MCF 10A (cell line): ENCODE measurements at regions of chr12 and their contacts with region 1.

Region 1: DNA sequence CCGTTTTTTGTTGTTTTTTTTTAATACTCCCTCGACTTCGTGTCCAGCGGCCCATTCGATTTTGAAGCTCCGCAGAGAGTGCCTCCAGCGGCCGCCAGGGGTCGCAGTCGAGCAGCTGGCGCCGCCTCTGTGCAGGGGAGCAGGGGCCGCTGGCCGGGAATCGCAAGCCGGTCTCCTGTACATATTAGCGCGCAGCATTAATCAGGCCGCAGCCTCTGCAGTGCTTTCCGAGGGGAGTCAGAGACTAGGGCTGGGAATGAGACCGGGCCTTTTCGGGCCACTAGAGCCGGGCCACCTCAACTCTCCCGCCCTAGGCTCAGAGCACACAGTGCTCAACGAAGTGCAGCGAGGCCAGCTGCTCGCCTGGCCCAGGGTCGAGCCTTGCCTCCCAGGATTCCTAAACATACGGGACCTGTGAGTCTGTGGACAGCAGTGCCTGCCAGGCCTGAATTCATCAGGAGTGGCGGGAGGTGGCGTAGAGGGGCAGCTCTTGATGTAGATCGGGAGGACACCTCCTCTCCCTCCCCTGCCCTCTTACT is 81.8 kb downstream of the EMP1 start:
- DNase-seq: peak; percentile 65
- H3K4me3 Mint-ChIP-seq: no peak overlapping the region
- H3K27ac Mint-ChIP-seq: no peak overlapping the region
- H3K4me1 Mint-ChIP-seq: no peaks in the 10 kb centered on the region
- H3K27me3 Mint-ChIP-seq: peaks cover 34% of the 10 kb centered on the region
- CTCF ChIP-seq: peak; percentile 91

Region 2: GRCh38 chr12:13179211-13180074 is 98.9 kb before region 1 on chr12:
- CTCF ChIA-PET with region 1: no interaction called
- POLR2A ChIA-PET with region 1: no interaction called
- intact Hi-C with region 1: no loop called
- DNase-seq: peak; percentile 64
- H3K4me3 Mint-ChIP-seq: peak overlapping the region; percentile 49
- H3K27ac Mint-ChIP-seq: peak overlapping the region; percentile 69
- H3K4me1 Mint-ChIP-seq: peaks cover 24% of the 10 kb centered on the region
- H3K27me3 Mint-ChIP-seq: no peaks in the 10 kb centered on the region
- CTCF ChIP-seq: no peak

Region 3: GRCh38 chr12:13211859-13212664 is 66.3 kb before region 1 on chr12:
- CTCF ChIA-PET with region 1: no interaction called
- POLR2A ChIA-PET with region 1: no interaction called
- intact Hi-C with region 1: no loop called
- DNase-seq: peak; percentile 78
- H3K4me3 Mint-ChIP-seq: peak overlapping the region; percentile 0
- H3K27ac Mint-ChIP-seq: peak overlapping the region; percentile 20
- H3K4me1 Mint-ChIP-seq: peaks cover 43% of the 10 kb centered on the region
- H3K27me3 Mint-ChIP-seq: no peaks in the 10 kb centered on the region
- CTCF ChIP-seq: peak; percentile 69

Region 4: DNA sequence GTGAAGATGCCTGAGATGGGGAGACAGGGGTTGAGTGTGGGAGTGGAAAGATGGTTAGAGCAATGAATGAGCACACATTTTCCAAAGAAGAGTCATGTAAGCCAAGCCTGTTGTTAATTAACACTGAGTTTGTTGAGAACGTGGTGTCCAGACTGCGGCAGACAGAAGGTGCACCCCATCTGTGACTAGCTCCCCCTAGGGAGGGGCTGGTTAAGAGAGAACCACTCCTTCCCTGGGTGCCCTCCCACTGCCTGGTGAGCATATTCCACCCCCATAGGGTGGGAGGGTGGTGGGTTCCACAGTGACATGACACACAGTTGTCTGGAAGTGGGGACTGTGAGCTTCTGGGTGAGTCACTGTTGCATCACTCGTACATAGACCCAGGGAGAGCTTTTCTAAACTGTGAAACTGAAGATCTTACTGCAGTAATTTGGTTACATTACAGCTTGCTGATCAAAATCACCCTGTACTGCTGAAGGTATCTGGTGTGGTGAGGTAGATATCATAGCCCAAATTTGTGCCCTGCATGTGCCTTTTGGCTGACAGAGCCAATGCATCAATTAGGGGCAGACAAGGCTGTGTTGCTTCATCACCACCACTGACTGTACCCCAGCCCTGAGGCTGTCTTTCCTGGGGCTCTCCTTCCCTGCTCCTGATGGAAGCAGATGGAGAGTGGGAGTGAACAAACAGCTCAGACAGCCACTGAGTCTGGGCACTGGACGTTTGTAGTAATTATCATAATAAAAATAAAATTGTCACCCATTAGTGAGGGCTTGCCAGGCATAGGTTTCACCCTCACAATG is 69.1 kb after region 1 on chr12:
- CTCF ChIA-PET with region 1: interaction called, 10 read pairs
- POLR2A ChIA-PET with region 1: no interaction called
- intact Hi-C with region 1: loop called (anchors 10 kb)
- DNase-seq: peak; percentile 72
- H3K4me3 Mint-ChIP-seq: no peak overlapping the region
- H3K27ac Mint-ChIP-seq: no peak overlapping the region
- H3K4me1 Mint-ChIP-seq: peaks cover 18% of the 10 kb centered on the region
- H3K27me3 Mint-ChIP-seq: peaks cover 7% of the 10 kb centered on the region
- CTCF ChIP-seq: no peak

Region 5: DNA sequence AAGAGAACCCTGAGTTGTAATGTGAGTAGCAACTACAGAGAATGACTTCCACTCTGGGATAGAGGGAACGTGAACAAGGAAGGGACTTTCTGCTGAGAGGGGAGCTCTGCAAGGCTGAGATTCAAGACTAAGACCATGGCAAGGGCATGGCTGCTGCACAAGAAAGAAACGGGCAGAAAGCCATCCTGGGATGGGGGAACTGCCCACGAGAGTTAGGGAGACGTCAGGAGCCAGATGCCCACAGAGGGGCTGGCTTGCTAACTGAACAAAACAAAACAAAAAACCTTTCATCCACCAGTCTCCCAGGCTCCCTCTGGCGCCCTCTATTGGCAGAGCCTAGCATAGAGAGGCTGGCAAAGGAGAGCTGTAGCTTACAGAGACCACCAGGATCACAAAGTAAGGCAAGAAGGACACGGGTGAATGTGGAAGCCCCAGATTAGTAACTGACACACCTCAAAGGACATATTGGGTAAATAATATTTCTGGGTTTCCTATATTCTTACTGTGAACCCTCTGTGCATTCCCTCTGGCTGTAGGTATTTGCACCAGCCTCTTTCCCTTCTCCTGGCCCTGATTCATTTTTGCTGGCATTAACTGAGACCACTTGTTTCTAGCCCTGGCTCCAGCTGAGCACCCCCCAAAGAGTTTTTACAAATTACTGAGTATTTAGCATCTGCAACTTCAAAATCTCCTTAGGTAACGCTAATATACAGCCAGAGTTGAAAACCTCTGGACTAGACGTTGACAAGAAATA is 256.5 kb after region 1 on chr12:
- CTCF ChIA-PET with region 1: interaction called, 16 read pairs
- POLR2A ChIA-PET with region 1: no interaction called
- intact Hi-C with region 1: loop called (anchors 1 kb)
- DNase-seq: peak; percentile 75
- H3K4me3 Mint-ChIP-seq: no peak overlapping the region
- H3K27ac Mint-ChIP-seq: no peak overlapping the region
- H3K4me1 Mint-ChIP-seq: no peaks in the 10 kb centered on the region
- H3K27me3 Mint-ChIP-seq: peaks cover 27% of the 10 kb centered on the region
- CTCF ChIP-seq: peak; percentile 86

Region 6: GRCh38 chr12:13864081-13864673 is 585.9 kb after region 1 on chr12:
- CTCF ChIA-PET with region 1: no interaction called
- POLR2A ChIA-PET with region 1: no interaction called
- intact Hi-C with region 1: loop called (anchors 10 kb)
- DNase-seq: peak; percentile 73
- H3K4me3 Mint-ChIP-seq: no peak overlapping the region
- H3K27ac Mint-ChIP-seq: no peak overlapping the region
- H3K4me1 Mint-ChIP-seq: no peaks in the 10 kb centered on the region
- H3K27me3 Mint-ChIP-seq: peaks cover 72% of the 10 kb centered on the region
- CTCF ChIP-seq: peak; percentile 87

Region 7: DNA sequence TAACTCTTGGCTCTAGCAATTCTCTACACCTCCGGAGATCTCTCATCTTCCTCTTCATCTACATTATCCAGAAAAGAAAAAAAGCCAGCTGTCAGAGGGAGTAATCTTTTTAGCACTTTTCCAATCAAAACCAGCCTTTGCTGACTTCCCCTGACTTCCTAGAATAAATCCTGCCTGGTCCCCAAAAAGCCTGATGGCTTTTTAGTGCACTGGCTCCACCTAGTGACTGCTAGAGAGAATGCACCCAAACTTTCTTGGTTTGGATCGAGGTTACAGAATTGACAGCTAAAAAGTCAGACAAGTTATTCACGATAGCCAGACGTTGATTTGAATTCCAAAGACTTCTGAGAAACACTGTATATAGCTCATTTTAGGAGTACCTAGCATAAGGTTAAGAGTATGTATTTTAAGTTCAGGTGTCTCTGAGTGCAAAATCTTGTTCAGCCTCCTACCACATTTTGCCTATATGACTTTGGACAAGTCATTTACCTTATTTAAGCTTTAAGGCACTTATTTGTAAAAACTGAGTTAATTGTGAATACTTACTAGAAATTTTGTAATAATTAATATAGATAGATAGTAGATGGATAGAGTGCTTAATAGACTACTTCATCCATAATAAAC is 888.8 kb after region 1 on chr12:
- CTCF ChIA-PET with region 1: interaction called, 8 read pairs
- POLR2A ChIA-PET with region 1: no interaction called
- intact Hi-C with region 1: loop called (anchors 2 kb)
- DNase-seq: peak; percentile 68
- H3K4me3 Mint-ChIP-seq: no peak overlapping the region
- H3K27ac Mint-ChIP-seq: no peak overlapping the region
- H3K4me1 Mint-ChIP-seq: no peaks in the 10 kb centered on the region
- H3K27me3 Mint-ChIP-seq: peaks cover 9% of the 10 kb centered on the region
- CTCF ChIP-seq: peak; percentile 95